ENCODE measurements at regions of chr11 and their contacts with region 1.

Region 1: DNA sequence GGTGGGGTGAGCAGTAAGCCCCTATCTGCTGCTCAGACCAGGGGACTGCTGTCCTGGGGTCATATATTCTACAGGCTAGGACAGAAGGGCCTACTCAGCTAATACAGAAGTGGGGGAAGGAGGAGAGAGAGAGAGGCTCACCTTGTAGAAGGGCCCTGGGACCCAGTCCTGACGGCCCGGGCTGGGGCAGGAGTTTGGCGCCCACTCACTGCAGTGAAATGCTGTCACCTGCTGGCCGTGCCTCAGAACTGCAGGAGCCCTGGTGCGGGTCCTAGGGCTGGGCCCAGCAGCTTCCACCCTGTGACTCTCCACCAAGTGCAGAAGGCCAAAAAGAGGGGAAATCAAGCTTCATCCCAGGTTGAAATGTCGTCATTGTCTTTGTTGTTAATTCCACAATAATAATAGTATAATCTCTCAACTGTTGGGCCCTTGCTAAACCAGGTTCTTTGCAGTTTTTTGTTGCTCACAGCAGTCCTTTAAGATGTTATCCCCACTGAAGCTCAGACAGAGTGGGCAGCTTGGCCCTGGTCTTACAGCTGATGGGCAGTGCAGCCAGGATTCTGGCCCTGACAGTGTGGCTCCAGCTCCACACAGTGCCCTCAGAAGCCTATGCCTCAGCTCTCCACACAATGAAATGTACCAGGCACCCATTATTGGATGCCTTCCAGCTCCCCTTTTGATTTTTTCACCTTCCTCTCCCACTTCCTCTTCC is 29.6 kb downstream of the TRIM29 start:
- DNase-seq: peak; percentile 14
- ATAC-seq: peak; percentile 90
- H3K4me3 ChIP-seq: no peak overlapping the region
- H3K27ac ChIP-seq: no peak overlapping the region
- H3K4me1 ChIP-seq: no peaks in the 10 kb centered on the region
- H3K27me3 ChIP-seq: peaks cover 4 to 56% of the 10 kb centered on the region in 2 experiments; a peak in 4 of 5 replicates
- CTCF ChIP-seq: peak; percentile 96
- EP300 ChIP-seq: no peak
- POLR2A ChIP-seq: no peak
- RAD21 ChIP-seq: peak; percentile 93

Region 2: DNA sequence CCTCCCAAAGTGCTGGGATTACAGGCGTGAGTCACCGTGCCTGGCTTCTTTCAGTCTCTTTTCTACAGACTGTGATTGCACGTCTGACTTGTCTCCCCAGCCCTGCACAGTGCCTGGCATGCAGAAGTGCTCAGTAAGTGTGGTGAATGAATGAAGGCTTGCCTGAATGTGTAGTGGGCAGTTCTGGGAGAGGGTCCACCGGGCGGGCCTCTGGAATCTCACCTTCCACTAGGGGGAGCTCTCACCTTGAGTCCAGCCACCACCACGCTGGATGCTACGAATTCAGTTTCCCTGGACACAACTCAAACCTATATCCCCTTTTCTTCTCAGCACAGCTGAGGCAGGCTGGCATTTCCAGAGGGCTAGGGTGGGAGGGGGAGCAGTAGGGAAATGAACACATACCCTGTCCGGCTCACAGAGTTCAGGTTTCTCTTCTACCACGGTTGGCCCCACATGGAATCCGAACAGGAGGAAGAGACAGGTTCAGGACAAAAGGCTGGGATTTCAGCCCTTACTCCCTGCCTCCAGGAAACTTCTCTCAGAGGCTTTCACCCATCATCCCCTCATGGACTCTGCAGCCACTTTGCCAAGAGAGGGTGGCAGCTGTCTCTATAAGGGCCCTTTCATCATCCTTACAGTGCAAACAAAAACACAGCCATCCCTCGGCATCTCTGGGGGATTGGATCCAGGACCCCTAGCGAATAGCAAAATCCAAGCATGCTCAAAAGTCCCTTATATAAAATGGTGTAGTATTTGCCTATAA is 466.1 kb before region 1 on chr11:
- CTCF ChIA-PET with region 1: interaction called, 5 read pairs
- POLR2A ChIA-PET with region 1: no interaction called
- in situ Hi-C with region 1: no loop called
- intact Hi-C with region 1: loop called (anchors 1 kb)
- DNase-seq: peak; percentile 40
- ATAC-seq: peak; percentile 64
- H3K4me3 ChIP-seq: no peak overlapping the region
- H3K27ac ChIP-seq: no peak overlapping the region
- H3K4me1 ChIP-seq: peaks cover 7% of the 10 kb centered on the region; the same call in 1 of the 2 replicates
- H3K27me3 ChIP-seq: peaks cover 3 to 69% of the 10 kb centered on the region in 2 experiments; a peak in 3 of 5 replicates
- CTCF ChIP-seq: peak; percentile 76
- EP300 ChIP-seq: no peak
- POLR2A ChIP-seq: no peak
- RAD21 ChIP-seq: peak; percentile 41; the same call in 1 of the 2 replicates

Region 3: DNA sequence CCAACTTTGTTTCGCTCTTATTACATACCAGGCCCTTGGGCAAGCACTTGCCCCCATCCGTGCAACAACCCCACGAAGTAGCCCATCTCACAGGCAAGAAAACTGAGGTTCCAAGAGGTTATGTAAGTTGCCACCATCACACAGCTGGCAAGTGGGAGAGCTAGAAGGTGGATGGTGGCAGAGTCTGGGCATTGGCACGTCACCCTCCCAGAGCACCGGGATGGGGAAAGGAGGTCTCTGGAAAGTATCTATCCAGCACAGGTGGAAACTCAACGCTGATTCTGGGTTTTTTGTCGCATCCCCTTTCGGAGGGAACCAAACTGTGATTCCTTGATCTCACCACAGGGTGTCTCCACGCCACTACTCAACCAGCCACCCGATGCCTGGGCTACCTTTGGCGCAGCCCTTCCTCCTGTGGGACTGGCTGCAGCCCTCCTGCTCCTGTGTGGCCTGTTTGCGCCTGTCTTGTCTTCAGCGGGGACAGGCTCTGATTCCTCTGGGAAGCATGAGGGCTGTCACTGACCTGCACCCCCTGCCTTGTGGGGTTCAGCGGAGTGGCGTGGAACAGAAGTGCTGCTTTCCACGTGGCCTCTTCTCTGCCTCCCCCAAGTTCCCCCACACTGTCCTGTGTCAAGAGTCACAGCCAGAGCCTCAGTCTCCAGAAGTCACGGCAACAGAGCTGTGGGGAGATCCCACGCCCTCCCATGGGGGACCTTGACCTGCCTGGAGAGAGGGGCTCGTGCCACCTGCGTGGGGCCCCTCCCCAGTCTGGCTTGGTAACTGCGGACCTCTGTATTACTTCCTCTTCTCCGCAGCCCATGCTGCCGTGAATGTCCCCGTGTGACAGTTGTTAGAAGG is 64.0 kb after region 1 on chr11:
- CTCF ChIA-PET with region 1: no interaction called
- POLR2A ChIA-PET with region 1: no interaction called
- in situ Hi-C with region 1: no loop called
- intact Hi-C with region 1: no loop called
- DNase-seq: peak; percentile 63
- ATAC-seq: peak; percentile 73
- H3K4me3 ChIP-seq: no peak overlapping the region
- H3K27ac ChIP-seq: no peak overlapping the region
- H3K4me1 ChIP-seq: peaks cover 19% of the 10 kb centered on the region
- H3K27me3 ChIP-seq: peaks cover 6 to 23% of the 10 kb centered on the region in 2 experiments; a peak in 4 of 5 replicates
- CTCF ChIP-seq: peak; percentile 97
- EP300 ChIP-seq: no peak
- POLR2A ChIP-seq: no peak
- RAD21 ChIP-seq: peak; percentile 98

Measured in HepG2 (cell line).